CD4-positive, alpha-beta T cell (primary cell): ENCODE measurements at regions of chr19 and their contacts with region 1.

Region 1: DNA sequence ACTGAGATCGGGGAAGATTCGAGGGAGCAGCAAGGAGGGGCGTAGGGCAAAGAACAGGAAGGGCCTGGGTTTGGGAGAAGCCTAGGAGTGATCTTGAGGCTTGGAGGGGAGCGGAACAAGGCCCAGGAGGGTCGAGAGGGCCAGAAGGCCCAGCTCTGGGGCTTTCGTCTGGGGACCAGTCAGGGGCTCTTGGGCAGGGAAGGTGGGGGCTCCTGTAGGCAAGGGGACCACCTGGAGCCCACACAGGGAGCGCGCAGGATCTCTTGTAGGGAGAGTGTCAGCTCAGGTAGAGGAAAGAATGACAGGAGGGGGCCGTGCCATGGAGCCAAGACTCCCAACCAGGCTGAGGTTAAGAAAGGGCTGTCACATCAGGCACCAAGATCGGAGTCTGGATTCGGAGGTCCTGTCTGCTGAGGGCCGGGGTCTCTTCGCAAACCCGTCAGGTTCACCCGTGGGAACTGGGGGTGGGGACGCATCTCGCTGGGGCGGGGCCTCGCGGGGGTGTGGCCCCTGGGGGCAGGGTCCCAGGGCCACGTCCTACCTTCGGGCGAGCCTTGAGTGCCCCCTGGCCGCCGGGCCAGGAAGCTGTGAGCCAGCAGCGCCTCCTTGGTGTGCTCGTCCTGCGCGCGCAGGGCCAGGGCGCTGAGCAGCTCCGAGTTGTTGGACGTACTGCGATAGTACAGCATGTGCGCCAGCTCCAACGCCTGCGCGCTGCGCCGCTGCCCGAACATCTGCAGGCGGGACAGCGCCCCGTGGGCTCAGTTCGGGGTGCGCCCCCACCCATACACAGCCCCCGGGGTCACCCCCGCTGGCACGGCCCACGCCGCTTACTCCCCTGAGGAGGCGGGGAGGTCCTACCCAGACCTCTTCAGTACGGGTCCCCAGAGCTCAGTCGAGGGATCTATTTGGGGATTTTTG is 8.4 kb downstream of the EMP3 start:
- DNase-seq: peak; percentile 89 to 97 (median 95)
- ATAC-seq: peak; percentile 56
- H3K4me3 ChIP-seq: peak overlapping the region; percentile 97
- H3K4me3 Mint-ChIP-seq: peak overlapping the region; percentile 89
- H3K27ac ChIP-seq: peak overlapping the region; percentile 97
- H3K27ac Mint-ChIP-seq: peak overlapping the region; percentile 99
- H3K4me1 ChIP-seq: peaks cover 58% of the 10 kb centered on the region
- H3K4me1 Mint-ChIP-seq: peaks cover 47% of the 10 kb centered on the region
- H3K27me3 ChIP-seq: no peaks in the 10 kb centered on the region
- H3K27me3 Mint-ChIP-seq: no peaks in the 10 kb centered on the region
- CTCF ChIP-seq: peak; percentile 84

Region 2: GRCh38 chr19:48249502-48250014 is 84.2 kb before region 1 on chr19:
- CTCF ChIA-PET with region 1: interaction called, 7 read pairs
- POLR2A ChIA-PET with region 1: interaction called, 16 read pairs
- intact Hi-C with region 1: no loop called
- DNase-seq: peak; percentile 46 to 88 (median 68)
- ATAC-seq: peak; percentile 91
- H3K4me3 ChIP-seq: peak overlapping the region; percentile 67
- H3K4me3 Mint-ChIP-seq: peak overlapping the region; percentile 93
- H3K27ac ChIP-seq: peak overlapping the region; percentile 91 to 94
- H3K27ac Mint-ChIP-seq: peak overlapping the region; percentile 99
- H3K4me1 ChIP-seq: peaks cover 63% of the 10 kb centered on the region
- H3K4me1 Mint-ChIP-seq: peaks cover 86% of the 10 kb centered on the region
- H3K27me3 ChIP-seq: no peaks in the 10 kb centered on the region
- H3K27me3 Mint-ChIP-seq: no peaks in the 10 kb centered on the region
- CTCF ChIP-seq: no peak

Region 3: GRCh38 chr19:48315712-48316111 is 18.0 kb before region 1 on chr19:
- CTCF ChIA-PET with region 1: interaction called, 159 read pairs
- POLR2A ChIA-PET with region 1: interaction called, 360 read pairs
- intact Hi-C with region 1: loop called (anchors 1 kb)
- DNase-seq: no peak
- ATAC-seq: no peak
- H3K4me3 ChIP-seq: no peak overlapping the region
- H3K4me3 Mint-ChIP-seq: no peak overlapping the region
- H3K27ac ChIP-seq: no peak overlapping the region
- H3K27ac Mint-ChIP-seq: no peak overlapping the region
- H3K4me1 ChIP-seq: peaks cover 10% of the 10 kb centered on the region
- H3K4me1 Mint-ChIP-seq: peaks cover 9% of the 10 kb centered on the region
- H3K27me3 ChIP-seq: no peaks in the 10 kb centered on the region
- H3K27me3 Mint-ChIP-seq: no peaks in the 10 kb centered on the region
- CTCF ChIP-seq: no peak

Region 4: GRCh38 chr19:48363810-48364563 is 30.3 kb after region 1 on chr19 and contains the starts of genes SYNGR4 and TMEM143:
- CTCF ChIA-PET with region 1: interaction called, 18 read pairs
- POLR2A ChIA-PET with region 1: interaction called, 74 read pairs
- intact Hi-C with region 1: loop called (anchors 1 to 2 kb)
- DNase-seq: peak; percentile 96 to 100 (median 98)
- ATAC-seq: peak; percentile 86
- H3K4me3 ChIP-seq: peak within 1 kb of the TSS; percentile 94
- H3K4me3 Mint-ChIP-seq: peak within 1 kb of the TSS; percentile 90
- H3K27ac ChIP-seq: peak within 1 kb of the TSS; percentile 77 to 87
- H3K27ac Mint-ChIP-seq: peak within 1 kb of the TSS; percentile 90
- H3K4me1 ChIP-seq: peaks cover 22% of the 10 kb centered on the region
- H3K4me1 Mint-ChIP-seq: peaks cover 17% of the 10 kb centered on the region
- H3K27me3 ChIP-seq: no peaks in the 10 kb centered on the region
- H3K27me3 Mint-ChIP-seq: no peaks in the 10 kb centered on the region
- CTCF ChIP-seq: no peak
- total RNA-seq, gene SYNGR4: not detected
- total RNA-seq, gene TMEM143: 9.4 to 11.0 TPM

Region 5: DNA sequence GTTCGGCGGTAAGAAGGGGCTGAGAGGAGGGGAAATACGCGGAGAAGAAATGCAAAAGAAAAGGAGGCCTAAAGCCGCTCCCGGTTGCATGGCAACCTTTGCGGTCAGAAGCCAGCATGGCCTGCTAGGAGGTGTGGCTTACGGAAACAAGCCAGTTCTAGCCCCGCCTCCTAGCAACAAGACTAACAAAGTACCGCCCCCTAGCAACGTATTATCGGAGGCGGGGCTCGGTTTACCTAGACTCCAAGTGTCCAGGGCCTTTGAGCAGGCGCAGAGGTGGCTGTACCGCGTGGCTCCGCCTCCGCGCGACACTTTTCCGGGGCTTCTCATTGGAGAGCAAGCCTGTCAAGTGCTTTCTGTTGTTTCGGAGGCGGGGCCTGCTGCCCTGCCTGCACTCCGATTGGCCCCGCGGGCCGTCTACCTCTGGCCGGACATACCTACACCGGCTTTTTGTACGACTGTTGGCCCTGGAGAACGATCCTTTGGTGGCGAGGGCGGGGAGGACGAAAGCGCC is 135.1 kb after region 1 on chr19:
- CTCF ChIA-PET with region 1: interaction called, 3 read pairs
- POLR2A ChIA-PET with region 1: no interaction called
- intact Hi-C with region 1: loop called in 1 of 2 experiments (anchors 5 kb)
- DNase-seq: peak; percentile 98 to 100 (median 99)
- ATAC-seq: peak; percentile 89
- H3K4me3 ChIP-seq: peak overlapping the region; percentile 96
- H3K4me3 Mint-ChIP-seq: peak overlapping the region; percentile 90
- H3K27ac ChIP-seq: peak overlapping the region; percentile 25 to 79
- H3K27ac Mint-ChIP-seq: peak overlapping the region; percentile 82
- H3K4me1 ChIP-seq: peaks cover 22% of the 10 kb centered on the region
- H3K4me1 Mint-ChIP-seq: peaks cover 21% of the 10 kb centered on the region
- H3K27me3 ChIP-seq: no peaks in the 10 kb centered on the region
- H3K27me3 Mint-ChIP-seq: no peaks in the 10 kb centered on the region
- CTCF ChIP-seq: no peak

Region 6: DNA sequence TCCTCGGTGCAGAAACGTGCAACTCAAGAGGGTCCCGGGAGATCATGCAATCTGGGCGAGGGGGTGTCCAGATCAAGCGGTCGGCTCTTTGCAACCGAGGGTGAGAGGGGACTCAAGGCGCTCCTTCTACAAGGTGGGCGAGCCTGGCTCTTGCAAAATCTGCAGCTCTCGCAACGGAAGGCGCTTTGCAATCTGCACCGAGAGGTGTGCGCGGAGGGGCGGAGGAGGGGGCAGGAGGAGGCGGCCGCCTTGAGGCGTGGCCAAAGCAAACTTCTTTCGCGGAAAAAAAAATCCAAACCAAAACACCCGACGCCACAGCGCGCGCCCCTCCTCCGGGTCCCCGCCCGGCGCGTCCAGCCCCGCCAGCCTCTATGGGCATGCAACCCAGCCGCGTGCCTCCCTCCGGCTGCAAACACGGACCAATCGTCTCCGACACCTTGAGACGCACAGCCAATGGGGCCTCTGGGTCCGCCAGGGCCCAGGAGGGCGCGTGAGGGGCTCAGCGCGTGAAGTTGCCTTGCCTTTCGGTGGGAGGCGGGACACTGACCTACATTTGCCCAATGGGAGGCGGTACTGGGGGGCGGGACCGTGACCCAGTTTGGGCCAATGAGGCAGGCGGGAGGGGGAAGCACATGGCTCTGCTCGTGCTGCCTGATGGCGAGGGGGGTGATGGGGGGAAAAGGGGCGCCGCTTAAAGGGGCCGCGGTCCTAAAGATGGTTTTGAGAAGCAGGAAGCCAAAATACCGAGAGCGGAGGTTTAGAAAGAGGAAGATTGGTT is 303.6 kb after region 1 on chr19 and contains the start of gene DBP:
- CTCF ChIA-PET with region 1: no interaction called
- POLR2A ChIA-PET with region 1: interaction called, 4 read pairs
- intact Hi-C with region 1: loop called in 1 of 2 experiments (anchors 5 kb)
- DNase-seq: peak; percentile 99 to 100 (median 100)
- ATAC-seq: peak; percentile 69
- H3K4me3 ChIP-seq: peak within 1 kb of the TSS; percentile 71
- H3K4me3 Mint-ChIP-seq: peak within 1 kb of the TSS; percentile 94
- H3K27ac ChIP-seq: peak within 1 kb of the TSS; percentile 86 to 94
- H3K27ac Mint-ChIP-seq: peak within 1 kb of the TSS; percentile 97
- H3K4me1 ChIP-seq: peaks cover 59% of the 10 kb centered on the region
- H3K4me1 Mint-ChIP-seq: peaks cover 50% of the 10 kb centered on the region
- H3K27me3 ChIP-seq: no peaks in the 10 kb centered on the region
- H3K27me3 Mint-ChIP-seq: no peaks in the 10 kb centered on the region
- CTCF ChIP-seq: no peak
- total RNA-seq, gene DBP: 48.3 to 55.6 TPM